Activated B cell treated with CpG ODN at 0.5 μM for 24 hours (primary cell): ENCODE measurements at regions of chr14 and their contacts with region 1.

Region 1: DNA sequence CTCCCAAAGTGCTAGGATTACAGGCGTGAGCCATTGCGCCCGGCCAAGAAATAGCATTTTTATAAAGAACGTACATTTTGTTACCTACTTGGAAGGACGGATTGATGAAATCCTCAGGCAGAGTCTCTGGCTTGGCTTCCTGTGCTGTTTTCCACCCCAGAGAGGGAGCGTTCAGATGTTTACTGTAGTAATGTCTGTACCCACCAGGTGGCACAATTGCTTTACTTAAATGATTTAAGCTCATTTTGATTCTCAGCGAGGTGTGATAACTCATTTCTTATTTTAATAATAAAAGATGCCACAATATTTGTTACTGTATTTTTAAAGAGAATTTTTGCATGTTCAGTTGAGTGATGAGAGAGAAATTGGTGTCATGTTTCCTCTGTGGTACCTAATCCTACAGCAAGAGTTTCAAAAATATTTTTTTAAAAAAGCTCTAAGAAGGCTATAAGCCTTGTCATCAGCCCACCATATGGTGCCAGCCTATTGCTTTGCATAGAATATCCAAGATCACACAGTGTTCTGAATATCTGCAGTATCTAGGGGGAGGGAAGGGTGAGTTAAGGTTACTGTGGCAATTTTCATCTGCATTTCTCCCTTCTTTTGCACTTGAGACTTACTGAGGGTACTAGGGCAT is 82.6 kb upstream of the TRAF3 start:
- DNase-seq: no peak
- ATAC-seq: peak; percentile 77
- H3K4me3 Mint-ChIP-seq: no peak overlapping the region
- H3K27ac Mint-ChIP-seq: no peak overlapping the region
- H3K4me1 Mint-ChIP-seq: peaks cover 41% of the 10 kb centered on the region
- H3K27me3 Mint-ChIP-seq: no peaks in the 10 kb centered on the region
- CTCF ChIP-seq: no peak

Region 2: DNA sequence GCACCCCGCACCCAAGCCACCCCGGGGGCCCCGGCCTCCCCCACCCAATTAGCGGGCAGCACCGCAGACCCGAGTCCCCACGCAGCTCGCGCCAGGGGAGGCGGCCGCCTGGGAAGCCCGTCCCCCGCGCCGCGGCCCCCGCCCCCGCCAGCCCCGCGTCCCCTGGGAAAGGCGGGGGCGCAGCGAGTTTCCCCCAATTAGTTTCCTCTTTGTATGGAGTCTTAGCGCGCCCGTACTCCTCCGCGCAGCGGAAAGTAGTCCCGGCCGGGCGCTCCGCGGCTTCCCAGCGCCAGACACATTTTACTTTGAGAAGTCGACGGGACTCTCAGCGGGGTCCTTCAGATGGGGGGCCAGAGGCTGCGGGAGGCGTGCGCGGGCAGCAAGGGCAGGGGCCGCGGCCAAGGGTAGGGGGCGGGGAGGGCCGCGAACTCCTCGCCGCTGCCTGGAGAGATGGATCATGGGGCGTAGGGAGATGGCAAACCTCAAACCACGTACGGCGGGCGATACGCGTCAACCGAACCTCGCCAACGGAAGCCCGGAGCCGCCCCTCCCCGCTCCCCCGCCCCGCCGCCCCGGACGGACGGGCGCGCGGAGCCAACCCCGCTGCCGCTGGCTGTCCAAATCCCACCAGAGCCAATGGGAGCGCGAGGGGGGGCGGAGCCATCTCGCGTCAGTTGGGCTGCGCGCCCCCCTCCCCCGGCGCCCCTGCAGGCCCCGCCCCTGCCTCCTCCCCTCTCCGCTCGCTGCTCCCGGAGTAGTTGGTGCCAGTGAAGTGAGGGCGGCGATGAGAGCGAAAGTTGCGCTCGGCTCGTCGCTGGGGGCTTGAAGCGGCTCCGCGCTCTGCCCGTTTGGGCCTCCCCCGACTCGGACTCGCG is 102.5 kb before region 1 on chr14 and contains the start of gene RCOR1:
- CTCF ChIA-PET with region 1: interaction called, 30 read pairs
- POLR2A ChIA-PET with region 1: interaction called, 3 read pairs
- intact Hi-C with region 1: loop called (anchors 5 kb)
- DNase-seq: peak; percentile 94
- ATAC-seq: peak; percentile 84
- H3K4me3 Mint-ChIP-seq: peak within 1 kb of the TSS; percentile 93
- H3K27ac Mint-ChIP-seq: peak within 1 kb of the TSS; percentile 97
- H3K4me1 Mint-ChIP-seq: peaks cover 26% of the 10 kb centered on the region
- H3K27me3 Mint-ChIP-seq: no peaks in the 10 kb centered on the region
- CTCF ChIP-seq: no peak
- total RNA-seq, gene RCOR1: 21.0 and 23.0 TPM in 2 replicates

Region 3: DNA sequence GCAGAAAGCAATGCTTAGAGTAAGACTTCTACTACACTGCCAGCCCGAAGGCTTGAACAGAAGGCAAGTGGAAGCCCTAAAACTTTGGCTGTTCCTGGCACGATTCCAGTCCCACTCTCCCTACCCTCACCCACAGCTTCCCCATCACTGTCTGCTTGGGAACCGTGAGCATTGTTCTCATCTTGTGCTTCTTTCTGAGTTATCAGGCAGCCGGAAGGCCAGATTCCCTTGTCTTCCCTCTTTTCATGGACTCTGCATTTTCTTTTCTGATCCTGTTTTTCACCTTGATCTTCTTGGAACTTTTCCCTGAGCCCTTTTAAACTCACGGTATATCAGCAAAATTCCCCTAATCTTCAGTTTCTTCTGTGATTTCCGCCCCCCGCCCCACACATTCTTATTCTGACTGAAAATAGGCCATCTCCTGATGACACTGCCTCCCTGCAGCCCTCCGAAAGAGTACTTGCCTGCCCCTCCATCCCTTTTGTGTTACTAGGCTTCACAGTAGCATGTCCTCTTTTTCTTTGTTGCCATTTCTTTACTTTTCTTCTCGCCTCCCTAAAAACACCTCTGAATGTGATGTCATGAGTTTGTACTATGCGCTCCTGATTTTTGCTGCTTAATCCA is 72.3 kb before region 1 on chr14:
- CTCF ChIA-PET with region 1: no interaction called
- POLR2A ChIA-PET with region 1: no interaction called
- intact Hi-C with region 1: no loop called
- DNase-seq: no peak
- ATAC-seq: no peak
- H3K4me3 Mint-ChIP-seq: no peak overlapping the region
- H3K27ac Mint-ChIP-seq: no peak overlapping the region
- H3K4me1 Mint-ChIP-seq: peaks cover 59% of the 10 kb centered on the region
- H3K27me3 Mint-ChIP-seq: no peaks in the 10 kb centered on the region
- CTCF ChIP-seq: no peak

Region 4: GRCh38 chr14:102734436-102734835 is 39.8 kb after region 1 on chr14:
- CTCF ChIA-PET with region 1: no interaction called
- POLR2A ChIA-PET with region 1: no interaction called
- intact Hi-C with region 1: no loop called
- DNase-seq: no peak
- ATAC-seq: no peak
- H3K4me3 Mint-ChIP-seq: no peak overlapping the region
- H3K27ac Mint-ChIP-seq: peak overlapping the region; percentile 37
- H3K4me1 Mint-ChIP-seq: no peaks in the 10 kb centered on the region
- H3K27me3 Mint-ChIP-seq: no peaks in the 10 kb centered on the region
- CTCF ChIP-seq: no peak

Region 5: GRCh38 chr14:102870994-102871831 is 176.6 kb after region 1 on chr14:
- CTCF ChIA-PET with region 1: interaction called, 10 read pairs
- POLR2A ChIA-PET with region 1: no interaction called
- intact Hi-C with region 1: no loop called
- DNase-seq: no peak
- ATAC-seq: no peak
- H3K4me3 Mint-ChIP-seq: no peak overlapping the region
- H3K27ac Mint-ChIP-seq: no peak overlapping the region
- H3K4me1 Mint-ChIP-seq: peaks cover 30% of the 10 kb centered on the region
- H3K27me3 Mint-ChIP-seq: no peaks in the 10 kb centered on the region
- CTCF ChIP-seq: no peak

Region 6: GRCh38 chr14:102975662-102976061 is 281.0 kb after region 1 on chr14:
- CTCF ChIA-PET with region 1: interaction called, 10 read pairs
- POLR2A ChIA-PET with region 1: interaction called, 3 read pairs
- intact Hi-C with region 1: no loop called
- DNase-seq: no peak
- ATAC-seq: no peak
- H3K4me3 Mint-ChIP-seq: no peak overlapping the region
- H3K27ac Mint-ChIP-seq: no peak overlapping the region
- H3K4me1 Mint-ChIP-seq: no peaks in the 10 kb centered on the region
- H3K27me3 Mint-ChIP-seq: no peaks in the 10 kb centered on the region
- CTCF ChIP-seq: no peak

Region 7: DNA sequence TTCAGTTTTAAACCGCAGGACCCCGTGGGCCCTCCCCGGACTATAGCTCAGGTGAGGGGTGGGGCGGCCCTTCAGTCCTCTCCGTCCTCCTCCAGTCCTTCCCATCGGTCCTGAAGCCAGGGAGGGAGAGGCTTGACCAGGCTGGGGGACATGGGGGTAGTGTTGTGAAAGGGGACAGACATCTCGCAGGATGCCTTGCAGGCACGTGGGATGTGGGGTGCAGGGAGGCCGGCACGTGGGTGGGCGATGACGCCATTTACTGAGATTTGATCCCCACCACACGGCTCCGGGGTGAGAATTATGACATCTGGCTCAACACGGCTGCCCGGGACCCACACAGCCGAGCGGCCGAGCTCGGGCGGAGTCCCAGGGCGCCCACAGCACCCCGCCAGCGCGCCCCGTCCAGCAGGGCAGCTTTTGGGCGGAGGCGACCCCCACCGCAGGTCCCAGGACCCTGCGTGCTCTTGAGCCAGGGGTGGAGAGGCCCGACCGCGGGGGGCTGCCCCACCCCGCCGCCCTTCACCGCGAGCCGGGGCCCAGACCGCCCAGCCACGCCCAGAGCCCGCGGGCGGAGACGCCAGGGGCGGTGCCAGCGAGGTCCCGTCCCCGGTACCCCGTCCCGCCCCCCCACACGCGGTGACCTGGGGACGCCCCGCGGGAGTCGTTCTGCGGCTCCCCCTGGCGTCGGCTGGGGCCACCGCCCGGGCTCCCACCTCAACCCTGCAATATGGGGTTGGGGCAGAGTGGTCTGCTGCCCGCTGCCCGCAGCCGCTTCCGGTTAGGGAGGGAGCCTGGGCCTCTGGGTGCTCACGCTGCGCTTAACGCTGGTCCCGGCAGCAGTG is 396.6 kb after region 1 on chr14:
- CTCF ChIA-PET with region 1: interaction called, 4 read pairs
- POLR2A ChIA-PET with region 1: no interaction called
- intact Hi-C with region 1: loop called (anchors 1 kb)
- DNase-seq: peak; percentile 70
- ATAC-seq: peak; percentile 96
- H3K4me3 Mint-ChIP-seq: peak overlapping the region; percentile 72
- H3K27ac Mint-ChIP-seq: no peak overlapping the region
- H3K4me1 Mint-ChIP-seq: peaks cover 8% of the 10 kb centered on the region
- H3K27me3 Mint-ChIP-seq: peaks cover 7% of the 10 kb centered on the region
- CTCF ChIP-seq: peak; percentile 49

Region 8: GRCh38 chr14:103292426-103293374 is 598.1 kb after region 1 on chr14:
- CTCF ChIA-PET with region 1: interaction called, 7 read pairs
- POLR2A ChIA-PET with region 1: no interaction called
- intact Hi-C with region 1: loop called (anchors 1 kb)
- DNase-seq: peak; percentile 73
- ATAC-seq: peak; percentile 99
- H3K4me3 Mint-ChIP-seq: no peak overlapping the region
- H3K27ac Mint-ChIP-seq: no peak overlapping the region
- H3K4me1 Mint-ChIP-seq: peaks cover 6% of the 10 kb centered on the region
- H3K27me3 Mint-ChIP-seq: peaks cover 18% of the 10 kb centered on the region
- CTCF ChIP-seq: peak; percentile 24

Region 9: DNA sequence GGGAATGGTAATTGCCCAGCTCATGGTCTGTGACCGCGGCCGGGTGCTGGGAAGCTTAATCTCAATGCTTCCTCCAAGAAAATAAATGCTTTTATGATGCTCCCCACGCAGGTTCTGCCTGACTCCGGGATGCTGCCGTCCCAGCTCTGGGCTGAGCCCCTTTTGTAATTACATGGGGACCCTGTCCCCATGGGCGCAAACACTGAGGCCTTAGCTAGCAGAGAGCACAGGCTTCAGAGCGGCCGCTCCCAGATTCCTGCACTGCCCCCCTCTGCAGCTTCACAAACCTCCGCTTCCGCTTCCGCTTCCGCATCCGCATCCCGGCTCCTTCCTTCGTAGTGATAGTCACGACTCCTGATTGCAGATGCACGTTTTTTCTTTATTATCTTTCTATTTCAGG is 1573.2 kb after region 1 on chr14:
- CTCF ChIA-PET with region 1: no interaction called
- POLR2A ChIA-PET with region 1: no interaction called
- intact Hi-C with region 1: no loop called
- DNase-seq: no peak
- ATAC-seq: no peak
- H3K4me3 Mint-ChIP-seq: no peak overlapping the region
- H3K27ac Mint-ChIP-seq: no peak overlapping the region
- H3K4me1 Mint-ChIP-seq: no peaks in the 10 kb centered on the region
- H3K27me3 Mint-ChIP-seq: no peaks in the 10 kb centered on the region
- CTCF ChIP-seq: no peak